ENCODE measurements at regions of chr4 and their contacts with region 1.

Region 1: GRCh38 chr4:41294445-41295062 is 37.8 kb downstream of the UCHL1 start:
- DNase-seq: no peak
- ATAC-seq: no peak
- H3K4me3 ChIP-seq: no peak overlapping the region
- H3K27ac ChIP-seq: no peak overlapping the region
- H3K4me1 ChIP-seq: peaks cover 0 to 13% (median 0%) of the 10 kb centered on the region in 12 donors
- H3K27me3 ChIP-seq: no peaks in the 10 kb centered on the region
- CTCF ChIP-seq: no peak
- POLR2A ChIP-seq: no peak

Region 2: DNA sequence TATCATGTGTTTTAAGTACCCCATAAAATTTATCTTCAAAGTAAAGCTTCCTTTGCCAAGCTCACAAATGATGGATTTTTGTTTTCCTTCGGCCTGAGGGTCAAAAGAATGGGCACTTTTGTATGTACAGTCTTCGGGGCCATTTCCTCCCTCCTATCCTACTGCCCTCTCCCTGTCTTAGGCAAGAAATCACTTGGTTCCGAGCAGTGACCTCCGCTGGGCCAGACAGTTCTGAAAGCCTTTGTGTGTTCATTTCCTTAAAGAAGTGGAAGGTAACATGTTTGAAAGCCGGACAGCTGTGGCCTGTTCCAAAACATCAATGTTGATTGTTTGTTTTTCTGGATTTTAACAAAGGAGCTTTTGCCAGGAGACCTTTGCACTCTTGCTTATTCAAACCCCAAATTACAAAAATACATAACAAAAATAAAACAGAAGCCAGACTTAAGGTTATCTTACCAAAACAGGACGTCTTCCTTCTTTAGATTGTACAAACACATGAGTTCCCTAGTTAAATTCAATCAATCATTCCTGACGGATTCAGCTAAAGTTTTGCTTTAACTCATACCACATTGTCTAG is 132.8 kb after region 1 on chr4:
- intact Hi-C with region 1: loop called in 1 of 10 experiments (anchors 5 kb)
- DNase-seq: no peak
- ATAC-seq: peak in 3 of 4 donors; percentile 15 to 61 (median 52)
- H3K4me3 ChIP-seq: no peak overlapping the region
- H3K27ac ChIP-seq: peak overlapping the region in 11 of 12 donors; percentile 16 to 93 (median 67)
- H3K4me1 ChIP-seq: peaks cover 5 to 89% (median 60%) of the 10 kb centered on the region in 12 donors
- H3K27me3 ChIP-seq: no peaks in the 10 kb centered on the region
- CTCF ChIP-seq: no peak
- POLR2A ChIP-seq: no peak

Region 3: DNA sequence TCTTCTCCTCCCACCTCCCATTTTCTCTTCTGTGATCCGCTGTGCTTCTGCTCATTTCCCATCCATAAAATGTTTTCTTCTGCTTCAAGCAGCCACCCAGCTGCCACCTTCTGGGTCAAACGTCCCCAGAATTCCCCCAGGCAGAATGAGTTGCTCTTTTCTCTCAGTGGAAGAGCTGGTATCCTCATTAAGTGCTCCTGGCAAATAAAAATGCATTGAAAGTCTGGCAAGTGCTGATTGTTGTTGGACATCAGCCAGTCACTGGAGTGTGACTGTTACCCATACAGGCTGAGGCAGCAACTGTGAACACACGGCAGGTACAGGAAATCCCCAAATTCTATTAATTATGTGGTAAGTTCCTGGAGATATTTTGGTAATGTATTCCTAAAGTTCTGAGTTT is 296.0 kb after region 1 on chr4:
- intact Hi-C with region 1: no loop called
- DNase-seq: peak in 3 of 5 donors; percentile 46 to 55 (median 50)
- ATAC-seq: peak; percentile 43 to 79 (median 54)
- H3K4me3 ChIP-seq: no peak overlapping the region
- H3K27ac ChIP-seq: peak overlapping the region in 9 of 12 donors; percentile 29 to 65 (median 54)
- H3K4me1 ChIP-seq: peaks cover 6 to 93% (median 49%) of the 10 kb centered on the region in 12 donors
- H3K27me3 ChIP-seq: no peaks in the 10 kb centered on the region
- CTCF ChIP-seq: no peak
- POLR2A ChIP-seq: no peak

Region 4: DNA sequence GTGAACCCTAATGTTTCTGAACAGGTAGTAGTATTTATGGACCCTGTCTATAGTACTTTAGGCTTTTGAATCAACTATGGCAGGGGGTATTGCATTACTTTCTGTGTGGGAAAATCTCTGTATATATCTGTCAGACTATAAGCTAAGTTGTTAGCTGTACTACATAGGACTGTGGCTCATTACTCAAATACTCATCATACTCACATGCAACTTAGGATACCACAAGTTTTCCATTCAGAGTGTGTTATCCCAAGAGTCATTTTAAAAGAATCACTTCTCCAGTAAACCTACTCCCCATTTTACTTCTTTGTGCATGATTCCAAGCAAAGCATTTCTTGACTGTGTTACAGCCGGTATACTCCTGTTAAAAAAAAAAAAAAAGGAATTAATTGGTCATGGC is 358.4 kb after region 1 on chr4:
- intact Hi-C with region 1: loop called in 1 of 10 experiments (anchors 5 kb)
- DNase-seq: no peak
- ATAC-seq: no peak
- H3K4me3 ChIP-seq: no peak overlapping the region
- H3K27ac ChIP-seq: no peak overlapping the region
- H3K4me1 ChIP-seq: peaks cover 0 to 33% (median 18%) of the 10 kb centered on the region in 12 donors
- H3K27me3 ChIP-seq: no peaks in the 10 kb centered on the region
- CTCF ChIP-seq: no peak
- POLR2A ChIP-seq: no peak